Activated CD8-positive, alpha-beta T cell treated with anti-CD3 and anti-CD28 coated beads for 36 hours (primary cell): ENCODE measurements at regions of chr10 and their contacts with region 1.

Region 1: DNA sequence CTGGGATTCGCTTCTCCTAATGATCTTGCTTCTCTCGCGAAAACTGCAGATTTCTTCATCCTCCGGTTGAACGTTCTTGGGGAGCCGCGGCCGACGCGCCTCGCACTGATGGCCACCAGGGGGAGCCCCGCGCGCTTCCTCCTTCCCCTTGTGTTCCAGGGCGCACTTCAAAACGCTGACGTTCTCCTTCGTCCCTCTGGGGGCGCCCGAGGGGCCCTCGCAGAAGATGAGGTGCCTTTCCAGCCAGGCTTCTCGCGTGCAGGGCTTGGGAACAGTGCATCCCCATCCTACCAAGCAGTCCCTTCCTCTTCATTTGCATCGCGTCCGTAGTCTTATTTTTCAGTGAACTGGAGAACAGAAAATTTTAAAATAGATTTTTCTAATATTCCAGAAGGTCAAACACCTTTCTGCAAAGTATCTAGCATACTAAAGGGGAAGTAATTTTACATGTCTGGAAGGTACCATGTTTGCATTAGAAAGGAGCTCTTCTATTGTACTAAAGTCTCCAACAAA is 22.5 kb downstream of the GSTO2 start:
- DNase-seq: peak; percentile 94
- ATAC-seq: peak; percentile 100
- H3K4me3 Mint-ChIP-seq: no peak overlapping the region
- H3K27ac Mint-ChIP-seq: no peak overlapping the region
- H3K4me1 Mint-ChIP-seq: peaks cover 9% of the 10 kb centered on the region
- H3K27me3 Mint-ChIP-seq: peaks cover 12% of the 10 kb centered on the region
- CTCF ChIP-seq: peak; percentile 99

Region 2: DNA sequence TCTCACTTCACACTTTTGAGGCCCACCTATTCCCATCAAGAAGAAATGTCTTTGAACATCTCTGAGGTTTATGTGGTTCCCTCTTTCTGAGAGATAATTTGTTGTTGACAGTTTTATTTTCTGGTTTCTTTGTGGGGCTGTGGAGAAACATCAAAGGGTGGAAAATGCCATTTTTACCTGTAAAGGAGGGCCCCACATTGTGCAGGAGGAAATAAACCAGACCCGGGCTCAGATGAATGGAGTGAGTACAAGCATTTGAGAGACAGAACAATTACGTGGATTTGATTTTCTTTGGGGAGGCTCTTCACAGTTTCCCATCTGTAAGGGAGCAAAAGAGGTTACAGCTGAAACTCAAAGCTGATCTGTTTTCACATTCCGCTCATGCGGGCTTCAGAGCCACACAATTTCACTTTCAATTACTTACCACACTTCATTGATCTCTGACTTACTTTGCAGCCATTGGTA is 17.0 kb after region 1 on chr10:
- CTCF ChIA-PET with region 1: interaction called, 198 read pairs
- POLR2A ChIA-PET with region 1: interaction called, 3 read pairs
- intact Hi-C with region 1: no loop called
- DNase-seq: peak; percentile 59
- ATAC-seq: peak; percentile 73
- H3K4me3 Mint-ChIP-seq: peak overlapping the region; percentile 1
- H3K27ac Mint-ChIP-seq: peak overlapping the region; percentile 74
- H3K4me1 Mint-ChIP-seq: peaks cover 60% of the 10 kb centered on the region
- H3K27me3 Mint-ChIP-seq: peaks cover 5% of the 10 kb centered on the region
- CTCF ChIP-seq: no peak

Region 3: GRCh38 chr10:104328896-104329710 is 37.6 kb after region 1 on chr10:
- CTCF ChIA-PET with region 1: interaction called, 17 read pairs
- POLR2A ChIA-PET with region 1: no interaction called
- intact Hi-C with region 1: no loop called
- DNase-seq: peak; percentile 94
- ATAC-seq: peak; percentile 86
- H3K4me3 Mint-ChIP-seq: peak overlapping the region; percentile 73
- H3K27ac Mint-ChIP-seq: peak overlapping the region; percentile 98
- H3K4me1 Mint-ChIP-seq: peaks cover 96% of the 10 kb centered on the region
- H3K27me3 Mint-ChIP-seq: no peaks in the 10 kb centered on the region
- CTCF ChIP-seq: no peak

Region 4: GRCh38 chr10:104353325-104354048 is 62.0 kb after region 1 on chr10 and contains the start of gene CFAP58:
- CTCF ChIA-PET with region 1: interaction called, 234 read pairs
- POLR2A ChIA-PET with region 1: interaction called, 4 read pairs
- intact Hi-C with region 1: loop called (anchors 1 kb)
- DNase-seq: peak; percentile 92
- ATAC-seq: peak; percentile 82
- H3K4me3 Mint-ChIP-seq: peak within 1 kb of the TSS; percentile 16
- H3K27ac Mint-ChIP-seq: peak within 1 kb of the TSS; percentile 47
- H3K4me1 Mint-ChIP-seq: peaks cover 11% of the 10 kb centered on the region
- H3K27me3 Mint-ChIP-seq: peaks cover 2% of the 10 kb centered on the region
- CTCF ChIP-seq: peak; percentile 78
- total RNA-seq, gene CFAP58: 0.27 to 0.38 TPM